CD4-positive, alpha-beta T cell (primary cell): ENCODE measurements at regions of chr1 and their contacts with region 1.

Region 1: DNA sequence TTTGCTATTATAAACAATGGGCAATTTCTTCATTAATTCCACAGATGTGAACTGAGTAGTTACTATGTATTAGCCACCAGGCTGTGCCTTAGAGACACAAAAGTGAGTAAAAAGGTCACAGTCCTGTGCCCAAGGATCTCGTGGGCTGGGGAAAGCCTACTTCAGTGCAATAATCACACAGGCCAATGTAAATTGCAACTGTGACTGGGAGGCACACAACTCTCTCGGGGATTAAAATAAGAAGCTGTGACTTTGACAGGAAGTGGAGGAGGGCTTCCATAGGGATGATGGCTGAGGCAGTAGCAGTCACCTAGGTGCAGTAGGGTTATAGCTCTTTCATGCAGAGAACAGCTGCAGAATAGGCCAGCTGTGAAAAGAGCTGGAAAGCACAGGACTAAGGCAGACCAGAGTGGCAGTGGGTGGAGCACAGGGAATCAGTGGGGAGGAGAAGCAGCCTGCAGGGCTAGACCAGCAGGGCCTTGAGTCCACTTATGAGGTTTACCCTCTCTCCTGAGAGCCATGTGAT is 121.9 kb downstream of the MAB21L3 start:
- DNase-seq: peak in 12 of 14 experiments; percentile 10 to 71 (median 21)
- ATAC-seq: peak; percentile 99
- H3K4me3 ChIP-seq: no peak overlapping the region
- H3K4me3 Mint-ChIP-seq: no peak overlapping the region
- H3K27ac ChIP-seq: no peak overlapping the region
- H3K27ac Mint-ChIP-seq: peak overlapping the region; percentile 2
- H3K4me1 ChIP-seq: peaks cover 15% of the 10 kb centered on the region
- H3K4me1 Mint-ChIP-seq: peaks cover 26% of the 10 kb centered on the region
- H3K27me3 ChIP-seq: no peaks in the 10 kb centered on the region
- H3K27me3 Mint-ChIP-seq: no peaks in the 10 kb centered on the region
- CTCF ChIP-seq: peak; percentile 64

Region 2: DNA sequence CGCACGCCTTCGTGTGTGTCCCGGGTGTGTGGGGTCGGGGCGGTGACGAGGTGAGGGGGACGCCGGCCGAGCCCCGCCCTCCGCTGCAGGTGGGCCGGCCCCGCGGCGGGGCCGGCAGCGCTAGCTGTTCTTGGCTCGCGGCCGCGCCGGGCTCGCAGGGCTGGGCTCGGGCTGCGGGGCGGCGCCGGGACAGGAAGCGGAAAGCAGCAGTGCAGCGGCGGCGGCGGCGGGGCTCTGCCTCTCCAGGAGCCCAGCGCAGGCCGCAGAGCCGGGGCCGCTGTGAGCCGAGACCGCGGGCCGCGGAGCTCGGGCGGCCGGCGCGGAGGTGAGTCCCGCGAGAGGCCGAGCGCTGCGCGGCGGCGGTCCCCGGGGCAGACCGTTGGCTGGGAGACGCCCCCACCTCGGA is 591.3 kb before region 1 on chr1 and contains the start of gene VANGL1:
- CTCF ChIA-PET with region 1: no interaction called
- POLR2A ChIA-PET with region 1: no interaction called
- intact Hi-C with region 1: no loop called
- DNase-seq: peak in 8 of 14 experiments; percentile 19 to 50 (median 42)
- ATAC-seq: peak; percentile 67
- H3K4me3 ChIP-seq: peak within 1 kb of the TSS; percentile 56
- H3K4me3 Mint-ChIP-seq: peak within 1 kb of the TSS; percentile 91
- H3K27ac ChIP-seq: no peak within 1 kb of the TSS
- H3K27ac Mint-ChIP-seq: no peak within 1 kb of the TSS
- H3K4me1 ChIP-seq: peaks cover 4% of the 10 kb centered on the region
- H3K4me1 Mint-ChIP-seq: peaks cover 14% of the 10 kb centered on the region
- H3K27me3 ChIP-seq: peaks cover 13 to 18% of the 10 kb centered on the region in 2 experiments
- H3K27me3 Mint-ChIP-seq: peaks cover 29% of the 10 kb centered on the region
- CTCF ChIP-seq: no peak
- total RNA-seq, gene VANGL1: 1.1 to 1.8 TPM

Region 3: GRCh38 chr1:116151739-116152576 is 81.1 kb before region 1 on chr1:
- CTCF ChIA-PET with region 1: no interaction called
- POLR2A ChIA-PET with region 1: no interaction called
- intact Hi-C with region 1: loop called in 1 of 2 experiments (anchors 5 kb)
- DNase-seq: peak; percentile 51 to 93 (median 69)
- ATAC-seq: peak; percentile 89
- H3K4me3 ChIP-seq: peak overlapping the region; percentile 48
- H3K4me3 Mint-ChIP-seq: peak overlapping the region; percentile 81
- H3K27ac ChIP-seq: peak overlapping the region; percentile 45 to 69
- H3K27ac Mint-ChIP-seq: peak overlapping the region; percentile 91
- H3K4me1 ChIP-seq: peaks cover 22% of the 10 kb centered on the region
- H3K4me1 Mint-ChIP-seq: peaks cover 31% of the 10 kb centered on the region
- H3K27me3 ChIP-seq: no peaks in the 10 kb centered on the region
- H3K27me3 Mint-ChIP-seq: no peaks in the 10 kb centered on the region
- CTCF ChIP-seq: peak; percentile 86

Region 4: DNA sequence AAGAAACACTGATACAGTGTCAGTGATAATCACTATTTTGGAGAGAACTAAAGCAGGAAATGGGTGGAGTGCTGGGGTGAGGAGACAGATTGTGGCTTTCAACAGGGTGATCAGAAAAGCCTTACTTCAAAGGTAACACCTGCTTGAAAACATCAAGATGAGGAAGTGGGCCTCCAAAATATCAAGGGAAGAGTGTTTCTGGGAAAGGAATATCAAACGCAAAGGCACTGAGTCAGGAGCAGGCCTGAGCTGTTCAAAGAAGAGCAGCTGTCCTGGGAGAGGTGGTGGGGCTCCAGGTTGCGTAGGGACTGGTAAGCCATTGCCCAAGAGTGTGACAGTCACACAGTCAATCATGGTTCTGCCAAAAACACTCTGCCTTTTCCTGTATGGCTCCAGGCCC is 92.9 kb after region 1 on chr1:
- CTCF ChIA-PET with region 1: no interaction called
- POLR2A ChIA-PET with region 1: no interaction called
- intact Hi-C with region 1: loop called in 1 of 2 experiments (anchors 10 kb)
- DNase-seq: peak; percentile 25 to 83 (median 53)
- ATAC-seq: peak; percentile 91
- H3K4me3 ChIP-seq: peak overlapping the region; percentile 22
- H3K4me3 Mint-ChIP-seq: peak overlapping the region; percentile 62
- H3K27ac ChIP-seq: peak overlapping the region; percentile 72 to 85
- H3K27ac Mint-ChIP-seq: peak overlapping the region; percentile 91
- H3K4me1 ChIP-seq: peaks cover 60% of the 10 kb centered on the region
- H3K4me1 Mint-ChIP-seq: peaks cover 98% of the 10 kb centered on the region
- H3K27me3 ChIP-seq: no peaks in the 10 kb centered on the region
- H3K27me3 Mint-ChIP-seq: no peaks in the 10 kb centered on the region
- CTCF ChIP-seq: no peak

Region 5: DNA sequence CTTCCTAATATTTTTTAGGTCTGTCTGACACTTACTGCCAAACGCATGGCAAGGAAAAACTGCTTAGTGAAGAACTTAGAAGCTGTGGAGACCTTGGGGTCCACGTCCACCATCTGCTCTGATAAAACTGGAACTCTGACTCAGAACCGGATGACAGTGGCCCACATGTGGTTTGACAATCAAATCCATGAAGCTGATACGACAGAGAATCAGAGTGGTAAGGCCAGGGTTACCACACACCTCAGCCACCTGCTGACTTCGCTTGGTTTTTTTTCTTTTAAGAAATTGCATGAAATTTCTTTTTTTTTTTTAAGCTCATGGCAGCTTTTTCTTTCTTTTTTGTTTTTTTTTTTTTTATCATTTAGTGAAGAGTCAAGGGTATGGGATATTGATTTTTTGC is 157.1 kb after region 1 on chr1:
- CTCF ChIA-PET with region 1: interaction called, 3 read pairs
- POLR2A ChIA-PET with region 1: no interaction called
- intact Hi-C with region 1: loop called in 1 of 2 experiments (anchors 5 kb)
- DNase-seq: peak in 7 of 14 experiments; percentile 8 to 85 (median 39)
- ATAC-seq: peak; percentile 88
- H3K4me3 ChIP-seq: no peak overlapping the region
- H3K4me3 Mint-ChIP-seq: no peak overlapping the region
- H3K27ac ChIP-seq: peak overlapping the region; percentile 13 to 22
- H3K27ac Mint-ChIP-seq: peak overlapping the region; percentile 69
- H3K4me1 ChIP-seq: peaks cover 26% of the 10 kb centered on the region
- H3K4me1 Mint-ChIP-seq: peaks cover 68% of the 10 kb centered on the region
- H3K27me3 ChIP-seq: no peaks in the 10 kb centered on the region
- H3K27me3 Mint-ChIP-seq: no peaks in the 10 kb centered on the region
- CTCF ChIP-seq: no peak

Region 6: DNA sequence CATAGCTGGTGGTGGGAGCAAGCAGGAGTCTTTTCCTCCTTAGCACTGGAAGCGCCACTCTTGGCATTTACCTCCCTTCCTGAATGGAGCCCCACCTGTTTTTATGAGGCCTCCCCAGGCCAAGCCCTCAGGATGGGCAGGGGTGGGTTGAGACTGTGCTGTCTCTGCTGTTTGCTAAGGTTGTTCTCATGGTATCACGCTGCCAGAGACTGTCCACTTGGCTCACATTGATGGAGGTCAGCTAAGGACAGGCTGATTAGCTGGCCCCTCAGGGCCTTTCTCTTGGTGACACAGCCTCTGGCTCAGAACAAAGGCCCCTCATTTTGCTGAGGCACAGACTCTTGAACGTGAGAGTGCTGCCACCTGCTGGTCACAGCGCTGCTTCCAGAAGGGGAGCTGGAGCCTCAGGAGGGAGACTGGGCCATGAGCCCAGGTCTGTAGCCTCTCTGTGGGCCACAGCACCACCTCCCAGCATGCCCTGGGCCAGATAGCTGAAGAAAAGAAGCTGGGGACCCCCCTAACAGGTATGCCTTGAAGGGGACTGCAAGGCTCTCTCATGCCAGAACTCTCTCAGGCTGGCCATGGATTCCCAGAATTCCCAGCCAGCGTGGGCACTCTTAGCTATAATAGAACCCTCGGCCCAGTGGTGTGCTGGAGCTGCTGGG is 252.2 kb after region 1 on chr1:
- CTCF ChIA-PET with region 1: interaction called, 10 read pairs
- POLR2A ChIA-PET with region 1: interaction called, 4 read pairs
- intact Hi-C with region 1: loop called (anchors 1 kb)
- DNase-seq: peak; percentile 79 to 95 (median 86)
- ATAC-seq: peak; percentile 90
- H3K4me3 ChIP-seq: no peak overlapping the region
- H3K4me3 Mint-ChIP-seq: no peak overlapping the region
- H3K27ac ChIP-seq: no peak overlapping the region
- H3K27ac Mint-ChIP-seq: no peak overlapping the region
- H3K4me1 ChIP-seq: peaks cover 4% of the 10 kb centered on the region
- H3K4me1 Mint-ChIP-seq: no peaks in the 10 kb centered on the region
- H3K27me3 ChIP-seq: no peaks in the 10 kb centered on the region
- H3K27me3 Mint-ChIP-seq: no peaks in the 10 kb centered on the region
- CTCF ChIP-seq: peak; percentile 99